ENCODE measurements at regions of chr14 and their contacts with region 1.

Region 1: DNA sequence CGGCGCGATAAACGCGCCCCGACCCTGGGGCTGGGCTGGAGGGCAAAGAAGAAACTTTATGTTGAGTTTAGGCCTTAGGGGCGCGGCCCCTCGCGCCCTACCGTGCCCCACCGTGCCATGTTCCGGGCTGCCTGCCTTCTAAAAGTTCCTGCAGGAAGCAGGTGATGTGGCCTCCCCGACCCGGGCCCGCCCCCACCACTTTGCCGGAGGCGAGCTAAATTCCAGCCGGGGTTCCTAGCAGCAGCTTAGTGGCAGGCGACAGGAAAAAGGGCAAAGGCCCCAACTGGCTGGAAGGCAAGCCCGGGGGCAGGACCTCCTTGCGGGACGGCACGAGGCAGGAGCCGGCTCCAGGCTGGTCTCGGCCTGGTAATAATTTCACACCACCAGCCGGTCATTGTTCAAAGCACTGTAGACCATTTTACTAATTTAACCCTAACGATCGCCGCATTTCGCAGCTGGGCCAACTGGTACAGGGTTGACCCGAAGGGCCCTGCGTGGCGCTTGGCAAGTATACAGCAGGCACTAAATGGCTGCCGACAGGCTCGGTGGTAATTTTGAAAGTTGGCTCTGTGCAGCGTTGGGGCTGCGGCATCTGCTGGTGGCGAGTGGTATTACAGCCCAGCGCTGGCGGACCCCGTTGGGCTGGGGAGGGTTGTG is 895 bp upstream of the CCDC88C start:
- DNase-seq: peak; percentile 82 to 86 (median 84)
- H3K4me3 ChIP-seq: peak overlapping the region; percentile 46 to 52
- H3K4me3 Mint-ChIP-seq: peak overlapping the region; percentile 76 to 95 (median 84)
- H3K27ac ChIP-seq: peak overlapping the region; percentile 67
- H3K27ac Mint-ChIP-seq: peak overlapping the region; percentile 90 to 100 (median 95)
- H3K4me1 ChIP-seq: peaks cover 32% of the 10 kb centered on the region
- H3K4me1 Mint-ChIP-seq: peaks cover 23 to 56% (median 33%) of the 10 kb centered on the region in 4 donors
- H3K27me3 ChIP-seq: no peaks in the 10 kb centered on the region
- H3K27me3 Mint-ChIP-seq: peaks cover 0 to 1% of the 10 kb centered on the region in 2 donors

Region 2: GRCh38 chr14:91244501-91244901 is 174.0 kb before region 1 on chr14 and contains the start of gene GPR68:
- CTCF ChIA-PET with region 1: interaction called, 3 read pairs
- POLR2A ChIA-PET with region 1: interaction called, 68 read pairs
- intact Hi-C with region 1: loop called (anchors 5 kb)
- DNase-seq: peak in 4 of 5 donors; percentile 40 to 69 (median 43)
- H3K4me3 ChIP-seq: peak within 1 kb of the TSS; percentile 66 to 96
- H3K4me3 Mint-ChIP-seq: peak within 1 kb of the TSS; percentile 91 to 99 (median 94)
- H3K27ac ChIP-seq: peak within 1 kb of the TSS; percentile 99
- H3K27ac Mint-ChIP-seq: peak within 1 kb of the TSS; percentile 92 to 100 (median 99)
- H3K4me1 ChIP-seq: peaks cover 94% of the 10 kb centered on the region
- H3K4me1 Mint-ChIP-seq: peaks cover 64 to 98% (median 82%) of the 10 kb centered on the region in 4 donors
- H3K27me3 ChIP-seq: no peaks in the 10 kb centered on the region
- H3K27me3 Mint-ChIP-seq: no peaks in the 10 kb centered on the region
- total RNA-seq, gene GPR68: 10.6 to 10.8 TPM

Region 3: GRCh38 chr14:91311284-91311662 is 107.2 kb before region 1 on chr14:
- CTCF ChIA-PET with region 1: interaction called, 522 read pairs
- POLR2A ChIA-PET with region 1: interaction called, 491 read pairs
- intact Hi-C with region 1: loop called (anchors 1 kb)
- DNase-seq: peak; percentile 71 to 79 (median 77)
- H3K4me3 ChIP-seq: no peak overlapping the region
- H3K4me3 Mint-ChIP-seq: peak overlapping the region in 7 of 8 donors; percentile 61 to 87 (median 79)
- H3K27ac ChIP-seq: peak overlapping the region; percentile 64
- H3K27ac Mint-ChIP-seq: peak overlapping the region; percentile 91 to 99 (median 99)
- H3K4me1 ChIP-seq: peaks cover 64% of the 10 kb centered on the region
- H3K4me1 Mint-ChIP-seq: peaks cover 40 to 82% (median 57%) of the 10 kb centered on the region in 4 donors
- H3K27me3 ChIP-seq: no peaks in the 10 kb centered on the region
- H3K27me3 Mint-ChIP-seq: no peaks in the 10 kb centered on the region

Region 4: DNA sequence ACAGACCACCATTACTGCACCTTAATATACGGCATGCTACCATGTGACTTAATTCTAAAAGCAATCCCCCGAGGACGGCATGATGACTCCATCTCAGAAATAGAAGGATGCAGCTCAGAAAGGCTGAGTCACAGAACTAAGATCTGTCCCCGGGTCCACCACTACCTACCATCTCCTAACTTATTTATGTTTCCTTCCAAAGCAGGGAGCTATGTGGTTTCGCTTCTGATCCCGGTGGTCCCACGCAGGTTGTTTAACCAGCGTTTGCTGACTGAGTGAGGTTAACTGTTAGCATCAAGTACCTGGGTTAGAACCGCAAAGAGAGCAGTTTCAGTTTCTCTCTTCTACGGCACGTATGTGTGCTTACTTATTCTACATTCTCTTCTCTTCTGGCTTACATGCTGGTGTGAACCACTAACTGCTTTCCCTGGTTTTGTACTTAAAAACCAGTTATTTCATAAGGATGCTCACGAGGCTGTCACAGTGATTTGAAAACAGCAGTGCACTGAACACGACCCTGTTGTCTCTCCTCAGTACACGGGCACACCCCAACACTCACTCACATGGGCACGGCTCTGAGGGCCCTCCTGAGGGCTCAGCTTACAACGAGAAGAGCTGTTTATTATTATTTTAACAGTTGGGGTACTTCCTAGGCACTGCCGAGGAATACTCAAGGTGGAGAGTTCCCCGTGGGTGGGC is 67.6 kb before region 1 on chr14:
- CTCF ChIA-PET with region 1: interaction called, 158 read pairs
- POLR2A ChIA-PET with region 1: interaction called, 111 read pairs
- intact Hi-C with region 1: loop called (anchors 1 kb)
- DNase-seq: peak; percentile 73 to 89 (median 76)
- H3K4me3 ChIP-seq: peak overlapping the region; percentile 39 to 68
- H3K4me3 Mint-ChIP-seq: peak overlapping the region; percentile 83 to 94 (median 91)
- H3K27ac ChIP-seq: peak overlapping the region; percentile 88
- H3K27ac Mint-ChIP-seq: peak overlapping the region; percentile 93 to 99 (median 96)
- H3K4me1 ChIP-seq: peaks cover 91% of the 10 kb centered on the region
- H3K4me1 Mint-ChIP-seq: peaks cover 71 to 95% (median 87%) of the 10 kb centered on the region in 4 donors
- H3K27me3 ChIP-seq: no peaks in the 10 kb centered on the region
- H3K27me3 Mint-ChIP-seq: no peaks in the 10 kb centered on the region

Region 5: DNA sequence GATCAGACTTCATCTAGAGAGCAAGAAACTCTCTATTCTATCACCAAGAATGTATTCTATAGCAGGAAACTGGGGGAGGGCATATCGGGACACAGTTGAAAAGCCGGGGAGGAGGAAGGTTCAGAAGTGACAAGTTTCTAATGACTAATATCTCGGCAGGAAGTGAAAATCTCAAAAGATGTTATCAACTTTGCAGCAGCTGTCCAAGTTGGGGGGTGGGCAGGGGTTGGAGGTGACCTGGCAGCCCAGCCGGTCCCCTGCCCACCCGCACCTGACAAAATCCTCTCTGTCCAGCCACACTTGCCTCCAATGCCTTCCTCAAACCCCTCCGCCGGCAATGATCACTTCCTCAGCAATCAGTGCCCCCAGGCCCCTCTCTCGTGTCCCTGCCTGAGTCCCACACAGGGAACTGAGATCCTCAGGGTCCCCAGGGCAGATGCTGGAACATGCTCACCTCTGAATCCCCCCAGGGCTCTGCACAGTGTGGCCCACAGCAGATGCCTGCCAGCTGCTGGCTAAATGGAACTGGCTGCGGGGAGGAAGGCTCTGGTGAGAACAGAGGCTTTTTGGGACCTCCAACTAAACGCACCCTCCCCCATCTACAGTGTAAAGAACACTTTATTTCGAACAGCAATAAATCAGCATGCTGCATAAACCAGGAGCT is 44.8 kb before region 1 on chr14:
- CTCF ChIA-PET with region 1: interaction called, 39 read pairs
- POLR2A ChIA-PET with region 1: interaction called, 268 read pairs
- intact Hi-C with region 1: loop called (anchors 1 kb)
- DNase-seq: peak; percentile 54 to 89 (median 60)
- H3K4me3 ChIP-seq: peak overlapping the region; percentile 46 to 50
- H3K4me3 Mint-ChIP-seq: peak overlapping the region; percentile 78 to 94 (median 84)
- H3K27ac ChIP-seq: peak overlapping the region; percentile 79
- H3K27ac Mint-ChIP-seq: peak overlapping the region; percentile 93 to 98 (median 96)
- H3K4me1 ChIP-seq: peaks cover 99% of the 10 kb centered on the region
- H3K4me1 Mint-ChIP-seq: peaks cover 78 to 100% (median 90%) of the 10 kb centered on the region in 4 donors
- H3K27me3 ChIP-seq: no peaks in the 10 kb centered on the region
- H3K27me3 Mint-ChIP-seq: no peaks in the 10 kb centered on the region

Region 6: DNA sequence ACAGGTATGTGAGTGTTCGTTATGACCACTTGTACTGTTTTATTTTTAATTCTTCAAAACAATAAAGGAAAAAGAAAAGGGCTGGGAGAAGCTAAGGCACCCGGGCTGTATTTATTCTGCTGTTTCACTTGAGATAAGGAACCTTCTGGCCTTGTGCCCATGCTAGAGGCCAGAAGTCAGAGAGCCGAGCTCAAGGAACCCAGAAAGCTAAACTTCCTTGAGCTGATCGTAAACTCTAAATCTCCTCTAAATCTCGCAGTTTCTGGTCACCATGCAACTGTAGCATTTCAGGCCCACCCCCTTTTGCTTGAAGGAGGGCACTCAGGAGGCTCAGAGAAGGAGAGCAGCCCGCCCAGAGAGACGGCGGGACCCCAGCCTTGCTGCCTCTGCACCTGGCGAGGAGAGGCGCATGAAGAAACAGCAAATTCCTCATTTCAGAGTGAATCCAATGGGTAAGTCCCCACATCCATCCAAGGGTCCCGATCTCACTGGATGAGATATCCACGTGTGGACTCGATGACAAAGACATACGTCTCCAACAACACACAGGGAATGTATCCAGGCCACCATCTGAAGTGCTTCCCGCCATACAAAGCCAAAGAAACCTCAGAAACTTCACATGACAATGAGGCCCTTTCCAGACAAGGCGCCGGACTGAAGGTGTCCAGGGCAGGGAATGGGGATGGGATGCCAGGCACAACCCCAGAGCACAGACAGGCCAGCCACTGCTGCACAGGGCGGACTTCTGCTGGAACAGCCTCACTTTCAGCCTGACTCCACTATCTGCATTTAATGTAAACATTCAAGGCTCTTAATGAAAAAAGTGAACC is 15.5 kb before region 1 on chr14:
- CTCF ChIA-PET with region 1: interaction called, 88 read pairs
- POLR2A ChIA-PET with region 1: interaction called, 520 read pairs
- intact Hi-C with region 1: loop called (anchors 1 kb)
- DNase-seq: peak in 1 of 5 donors; percentile 38
- H3K4me3 ChIP-seq: peak overlapping the region in 1 of 2 donors; percentile 5
- H3K4me3 Mint-ChIP-seq: peak overlapping the region; percentile 54 to 82 (median 79)
- H3K27ac ChIP-seq: peak overlapping the region; percentile 94
- H3K27ac Mint-ChIP-seq: peak overlapping the region; percentile 94 to 99 (median 95)
- H3K4me1 ChIP-seq: peaks cover 97% of the 10 kb centered on the region
- H3K4me1 Mint-ChIP-seq: peaks cover 62 to 97% (median 84%) of the 10 kb centered on the region in 4 donors
- H3K27me3 ChIP-seq: no peaks in the 10 kb centered on the region
- H3K27me3 Mint-ChIP-seq: no peaks in the 10 kb centered on the region

Region 7: GRCh38 chr14:91439345-91439744 is 20.8 kb after region 1 on chr14:
- CTCF ChIA-PET with region 1: no interaction called
- POLR2A ChIA-PET with region 1: no interaction called
- intact Hi-C with region 1: no loop called
- DNase-seq: no peak
- H3K4me3 ChIP-seq: no peak overlapping the region
- H3K4me3 Mint-ChIP-seq: no peak overlapping the region
- H3K27ac ChIP-seq: no peak overlapping the region
- H3K27ac Mint-ChIP-seq: no peak overlapping the region
- H3K4me1 ChIP-seq: no peaks in the 10 kb centered on the region
- H3K4me1 Mint-ChIP-seq: no peaks in the 10 kb centered on the region
- H3K27me3 ChIP-seq: no peaks in the 10 kb centered on the region
- H3K27me3 Mint-ChIP-seq: peaks cover 3 to 7% of the 10 kb centered on the region in 2 donors

Measured in CD4-positive, alpha-beta memory T cell (primary cell).